Lower leg skin (tissue), 4 donors: ENCODE measurements at regions of chr4 and their contacts with region 1.

Region 1: GRCh38 chr4:88033309-88033708 is 25.9 kb downstream of the PKD2 start:
- DNase-seq: peak in 1 of 2 donors; percentile 40
- H3K4me3 ChIP-seq: no peak overlapping the region
- CTCF ChIP-seq: no peak
- POLR2A ChIP-seq: no peak

Region 2: DNA sequence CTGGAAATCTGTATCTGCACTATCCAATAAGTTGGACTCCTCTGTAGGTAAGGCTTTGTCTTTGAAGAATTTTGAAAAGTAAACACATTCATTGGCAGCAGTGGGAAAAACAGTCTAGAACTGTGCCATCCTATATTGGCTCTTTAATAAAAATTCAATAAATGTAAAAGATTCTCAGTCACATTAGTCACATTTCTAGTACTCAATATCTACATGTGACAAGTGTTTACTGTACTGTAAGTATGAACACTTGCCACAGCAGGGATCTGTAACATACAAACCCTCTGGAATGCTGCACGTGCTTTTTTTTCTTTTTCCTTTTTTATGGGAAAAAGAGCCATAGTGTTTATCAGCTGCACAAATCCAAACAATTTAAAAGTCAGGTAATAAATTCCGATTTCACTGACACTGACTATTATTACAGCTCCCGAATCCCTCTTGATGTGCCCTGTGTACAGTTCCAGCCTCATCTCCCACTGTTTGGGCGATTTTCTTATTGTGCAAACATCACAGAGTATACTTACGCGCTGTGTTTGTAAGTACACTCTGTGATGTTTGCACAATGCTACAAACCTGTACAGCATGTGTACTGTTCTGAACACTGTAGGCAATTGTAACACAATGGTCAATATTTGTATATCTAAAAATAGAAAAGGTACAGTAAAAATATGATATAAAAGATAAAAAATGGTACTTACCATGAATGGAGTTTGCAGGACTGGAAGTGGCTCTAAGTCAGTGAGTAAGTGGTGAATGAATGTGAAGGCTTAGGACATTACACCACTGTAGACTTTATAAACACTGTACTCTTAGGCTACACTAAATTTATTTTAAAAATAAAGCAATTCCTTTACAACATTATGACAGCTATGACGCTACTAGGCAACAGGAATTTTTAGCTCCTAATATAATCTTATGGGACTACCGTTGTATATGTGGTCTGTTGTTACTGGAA is 481.5 kb after region 1 on chr4:
- intact Hi-C with region 1: loop called (anchors 10 kb)
- DNase-seq: no peak
- H3K4me3 ChIP-seq: no peak overlapping the region
- CTCF ChIP-seq: no peak
- POLR2A ChIP-seq: no peak